ENCODE measurements at regions of chr19 and their contacts with region 1.

Region 1: DNA sequence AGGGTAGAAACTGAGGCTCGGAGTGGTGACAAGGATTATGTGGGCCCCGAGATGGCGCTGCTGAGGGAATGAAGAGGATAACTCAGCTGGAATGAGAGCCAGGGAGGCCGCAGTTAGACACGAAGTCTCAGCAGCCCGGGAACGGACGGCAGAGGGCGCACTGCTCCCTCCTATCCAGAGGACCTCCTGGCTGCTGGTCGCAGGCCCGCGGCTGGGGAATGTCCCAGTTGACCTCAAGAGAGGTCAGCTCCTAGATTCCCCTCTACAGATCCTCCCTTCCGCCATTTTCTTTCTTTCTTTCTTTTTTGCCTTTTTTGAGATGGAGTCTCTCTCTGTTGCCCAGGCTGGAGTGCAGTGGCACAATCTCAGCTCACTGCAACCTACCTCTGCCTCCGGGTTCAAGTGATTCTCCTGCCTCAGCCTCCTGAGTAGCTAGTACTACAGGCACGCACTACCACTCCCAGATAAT is 24.1 kb upstream of the ASPDH start:
- DNase-seq: peak; percentile 70 to 74
- H3K4me3 ChIP-seq: no peak overlapping the region
- H3K27ac ChIP-seq: no peak overlapping the region
- H3K4me1 ChIP-seq: no peaks in the 10 kb centered on the region
- H3K27me3 ChIP-seq: no peaks in the 10 kb centered on the region
- CTCF ChIP-seq: peak; percentile 23 to 70 (median 54)
- POLR2A ChIP-seq: no peak

Region 2: GRCh38 chr19:50779504-50780457 is 242.0 kb after region 1 on chr19:
- intact Hi-C with region 1: loop called (anchors 10 kb)
- DNase-seq: no peak
- H3K4me3 ChIP-seq: no peak overlapping the region
- H3K27ac ChIP-seq: no peak overlapping the region
- H3K4me1 ChIP-seq: no peaks in the 10 kb centered on the region
- H3K27me3 ChIP-seq: peaks cover 19% of the 10 kb centered on the region
- CTCF ChIP-seq: no peak
- POLR2A ChIP-seq: no peak